Activated naive CD4-positive, alpha-beta T cell treated with anti-CD3 and anti-CD28 coated beads for 36 hours (primary cell): ENCODE measurements at regions of chr1 and their contacts with region 1.

Region 1: DNA sequence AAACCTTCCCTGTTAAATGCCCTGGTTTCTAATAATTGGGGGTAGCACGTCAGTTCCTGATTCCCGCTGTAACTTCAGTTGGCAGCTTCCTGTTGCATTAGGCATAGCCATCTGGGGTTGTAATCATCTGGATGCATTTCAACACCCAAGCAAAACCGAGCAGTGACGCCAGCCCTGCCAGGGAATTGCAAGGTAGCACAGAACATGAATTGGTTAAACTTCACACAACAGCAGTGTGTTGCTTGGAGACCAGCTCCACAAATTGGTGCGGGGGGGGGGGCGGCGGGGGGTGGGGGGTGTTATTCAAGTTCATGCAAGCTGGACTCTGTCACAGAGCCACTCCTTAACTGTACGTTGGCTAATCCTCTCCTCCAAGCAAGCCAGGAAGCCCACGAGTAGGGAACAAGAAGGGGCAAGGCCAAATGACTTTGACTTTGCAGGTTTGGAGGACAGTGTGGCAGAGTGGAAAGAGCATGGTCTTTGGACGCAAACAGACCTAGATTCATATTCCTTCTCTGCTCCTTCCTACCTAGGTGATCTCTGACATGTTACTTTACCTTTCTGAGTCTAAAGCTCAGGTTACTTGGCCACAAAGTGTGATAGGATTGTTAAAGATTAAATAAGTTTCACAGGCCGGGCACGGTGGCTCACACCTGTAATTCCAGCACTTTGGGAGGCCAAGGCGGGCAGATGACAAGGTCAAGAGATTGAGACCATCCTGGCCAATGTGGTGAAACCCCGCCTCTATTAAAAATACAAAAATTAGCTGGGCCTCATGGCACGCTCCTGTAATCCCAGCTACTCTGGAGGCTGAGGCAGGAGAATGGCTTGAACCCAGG is 4.7 kb downstream of the LAX1 start:
- DNase-seq: no peak
- H3K4me3 Mint-ChIP-seq: no peak overlapping the region
- H3K27ac Mint-ChIP-seq: no peak overlapping the region
- H3K4me1 Mint-ChIP-seq: peaks cover 25% of the 10 kb centered on the region
- H3K27me3 Mint-ChIP-seq: no peaks in the 10 kb centered on the region

Region 2: DNA sequence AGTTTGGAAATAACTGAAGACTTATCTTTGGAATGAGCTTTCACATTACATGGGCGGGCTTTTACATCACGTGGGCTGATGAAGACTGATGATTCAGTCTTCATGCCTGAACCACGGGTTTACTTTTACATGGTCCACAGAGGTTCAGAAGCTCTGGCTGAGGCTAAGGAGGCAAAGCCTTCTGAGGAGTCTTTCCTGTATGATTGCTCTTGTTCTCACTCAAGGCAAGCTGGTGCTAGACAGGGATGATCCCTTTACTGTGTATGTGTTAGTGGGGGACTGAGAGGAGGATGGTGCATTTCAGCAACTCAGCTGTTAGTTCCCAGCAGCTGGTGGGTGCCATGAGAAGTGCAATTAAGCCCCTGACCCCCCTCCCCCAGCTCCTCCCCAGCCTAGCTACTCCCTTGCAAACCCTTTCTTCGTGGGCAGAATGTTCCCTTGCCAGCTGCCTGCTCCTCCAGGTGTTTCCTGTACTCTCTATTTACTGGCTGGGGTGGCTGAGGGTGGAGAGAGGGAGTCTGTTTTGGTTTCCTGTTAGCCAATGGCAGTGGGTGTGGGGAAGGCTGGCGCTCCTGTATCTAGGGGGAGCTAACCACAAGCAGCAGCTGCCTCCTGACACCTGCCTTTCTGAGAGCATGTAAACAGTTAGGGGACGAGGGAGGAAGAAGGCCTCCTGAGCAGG is 449.0 kb before region 1 on chr1:
- CTCF ChIA-PET with region 1: no interaction called
- intact Hi-C with region 1: loop called (anchors 5 kb)
- DNase-seq: peak; percentile 84
- H3K4me3 Mint-ChIP-seq: peak overlapping the region; percentile 40
- H3K27ac Mint-ChIP-seq: peak overlapping the region; percentile 88
- H3K4me1 Mint-ChIP-seq: peaks cover 76% of the 10 kb centered on the region
- H3K27me3 Mint-ChIP-seq: no peaks in the 10 kb centered on the region

Region 3: DNA sequence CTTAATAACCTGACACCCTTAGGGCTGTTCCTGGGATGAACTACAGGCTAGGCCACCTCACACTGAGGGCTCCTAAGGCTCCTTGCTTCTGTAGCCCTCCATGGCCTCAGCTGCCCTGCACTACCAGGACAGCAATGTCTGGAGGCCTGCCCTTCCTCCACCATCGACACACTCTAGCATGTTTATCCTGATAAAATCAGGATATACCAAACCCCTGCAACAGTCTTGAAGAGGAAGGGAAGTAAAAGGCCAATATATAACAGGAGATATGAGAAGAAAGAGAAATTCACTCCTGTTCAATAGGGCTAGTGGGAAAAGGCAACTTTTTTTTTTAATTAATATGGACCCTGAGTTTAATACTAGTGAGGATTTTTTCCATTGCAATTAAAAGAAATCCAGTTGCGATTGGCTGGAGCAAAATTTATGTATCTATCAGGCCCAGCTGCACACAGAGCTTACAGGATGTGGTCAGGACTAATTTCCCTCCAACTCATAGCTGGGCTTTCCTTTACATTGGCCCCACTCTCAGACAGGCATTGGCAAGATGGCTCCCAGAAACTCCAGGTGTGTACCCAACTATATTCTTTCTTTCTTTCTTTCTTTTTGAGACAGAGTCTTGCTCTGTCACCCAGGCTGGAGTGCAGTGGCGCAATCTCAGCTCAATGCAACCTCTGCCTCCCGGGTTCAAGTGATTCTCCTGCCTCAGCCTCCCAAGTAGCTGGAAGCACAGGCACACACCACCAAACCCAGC is 156.6 kb before region 1 on chr1:
- CTCF ChIA-PET with region 1: no interaction called
- intact Hi-C with region 1: loop called (anchors 5 kb)
- DNase-seq: peak; percentile 57
- H3K4me3 Mint-ChIP-seq: no peak overlapping the region
- H3K27ac Mint-ChIP-seq: peak overlapping the region; percentile 43
- H3K4me1 Mint-ChIP-seq: peaks cover 26% of the 10 kb centered on the region
- H3K27me3 Mint-ChIP-seq: no peaks in the 10 kb centered on the region

Region 4: GRCh38 chr1:203673550-203674427 is 95.9 kb before region 1 on chr1:
- CTCF ChIA-PET with region 1: no interaction called
- intact Hi-C with region 1: loop called (anchors 1 kb)
- DNase-seq: peak; percentile 84
- H3K4me3 Mint-ChIP-seq: peak overlapping the region; percentile 33
- H3K27ac Mint-ChIP-seq: peak overlapping the region; percentile 77
- H3K4me1 Mint-ChIP-seq: peaks cover 45% of the 10 kb centered on the region
- H3K27me3 Mint-ChIP-seq: no peaks in the 10 kb centered on the region

Region 5: DNA sequence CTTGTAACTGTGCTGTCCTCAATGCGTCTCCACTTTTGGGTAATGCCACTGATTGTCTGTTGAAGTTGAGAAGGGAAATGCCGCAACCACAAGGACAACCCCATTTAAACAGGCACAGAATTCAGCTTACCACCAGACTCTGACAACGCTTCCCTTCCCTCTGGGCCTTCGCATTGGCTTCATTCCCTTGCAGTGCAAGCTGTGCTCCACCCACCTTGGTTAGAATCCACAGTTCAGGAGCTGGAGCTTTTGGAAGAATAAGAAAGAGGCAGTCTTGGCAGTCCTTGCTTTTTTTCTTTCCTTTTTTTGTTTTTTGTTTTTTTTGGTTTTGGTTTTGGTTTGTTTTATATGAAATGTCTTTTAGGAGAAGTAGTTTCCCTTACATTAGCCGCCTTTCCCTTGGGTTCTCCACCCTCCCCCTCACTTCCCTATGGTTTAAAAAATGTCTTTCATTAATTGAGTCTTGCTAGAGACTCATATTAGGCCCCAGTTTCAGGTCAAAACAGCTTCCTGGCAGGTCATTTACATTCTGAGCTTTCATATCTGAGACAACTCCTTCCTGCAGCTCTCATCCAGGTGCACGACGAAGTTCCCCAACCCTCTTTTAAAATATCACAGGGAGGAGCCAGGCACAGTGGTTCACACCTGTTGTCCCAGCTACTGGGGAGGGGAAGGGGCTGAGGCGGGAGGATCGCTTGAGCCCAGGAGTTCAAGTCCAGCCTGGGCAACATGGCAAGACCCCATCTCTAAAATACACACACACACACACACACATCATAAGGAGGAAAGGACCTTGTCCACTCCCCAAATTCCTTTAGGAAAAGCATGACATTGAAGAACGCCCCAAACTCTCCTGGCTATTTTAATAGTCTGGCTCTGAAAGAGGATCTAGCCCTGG is 25.4 kb before region 1 on chr1:
- CTCF ChIA-PET with region 1: no interaction called
- intact Hi-C with region 1: loop called (anchors 1 kb)
- DNase-seq: peak; percentile 60
- H3K4me3 Mint-ChIP-seq: peak overlapping the region; percentile 31
- H3K27ac Mint-ChIP-seq: peak overlapping the region; percentile 77
- H3K4me1 Mint-ChIP-seq: peaks cover 19% of the 10 kb centered on the region
- H3K27me3 Mint-ChIP-seq: no peaks in the 10 kb centered on the region

Region 6: DNA sequence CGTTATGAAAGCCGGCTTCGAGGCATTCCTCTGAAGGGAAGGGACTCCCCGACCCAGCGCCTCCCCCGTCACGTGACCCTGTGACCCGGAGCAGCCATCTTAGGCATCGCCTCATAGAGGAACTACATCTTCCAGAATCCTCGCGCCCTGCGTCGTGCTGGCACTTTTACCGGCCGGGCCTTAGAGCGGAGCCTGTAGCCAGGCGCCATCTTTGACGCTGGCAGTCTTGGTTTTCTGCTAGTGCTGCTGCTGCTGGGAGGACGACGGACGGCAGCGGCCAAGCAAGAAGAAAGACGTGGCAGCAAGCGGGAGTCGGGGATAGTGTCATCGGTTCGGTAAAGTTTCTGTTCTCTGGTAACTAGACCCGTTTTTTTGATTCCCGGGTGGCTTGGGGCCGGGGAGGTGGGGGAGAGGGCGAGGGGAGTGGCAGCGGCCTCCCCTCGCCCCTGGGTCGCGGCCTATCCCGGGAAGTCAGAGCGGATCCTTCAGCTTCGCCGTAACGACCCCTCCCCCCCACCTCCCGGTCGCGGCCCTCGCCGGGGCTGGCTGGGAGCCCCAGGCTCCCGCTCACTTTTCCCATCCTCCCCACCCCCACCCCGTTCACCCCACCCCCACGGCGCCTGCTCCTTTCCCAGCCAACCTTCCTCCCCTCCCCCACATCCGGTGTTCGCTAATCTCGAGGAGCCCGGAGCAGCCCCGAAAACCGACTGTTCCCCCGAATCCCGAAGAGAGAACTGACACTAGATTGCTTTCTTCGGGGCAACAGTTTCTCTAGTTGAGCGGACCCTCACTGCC is 25.9 kb after region 1 on chr1 and contains the starts of genes ZBED6 and ZC3H11A:
- CTCF ChIA-PET with region 1: interaction called, 4 read pairs
- intact Hi-C with region 1: loop called (anchors 1 kb)
- DNase-seq: peak; percentile 100
- H3K4me3 Mint-ChIP-seq: peak within 1 kb of the TSS; percentile 96
- H3K27ac Mint-ChIP-seq: peak within 1 kb of the TSS; percentile 98
- H3K4me1 Mint-ChIP-seq: peaks cover 47% of the 10 kb centered on the region
- H3K27me3 Mint-ChIP-seq: no peaks in the 10 kb centered on the region
- total RNA-seq, gene ZBED6: 23.3 to 23.6 TPM
- total RNA-seq, gene ZC3H11A: 78.4 to 80.9 TPM

Region 7: GRCh38 chr1:204032632-204033235 is 263.0 kb after region 1 on chr1:
- CTCF ChIA-PET with region 1: no interaction called
- intact Hi-C with region 1: no loop called
- DNase-seq: no peak
- H3K4me3 Mint-ChIP-seq: no peak overlapping the region
- H3K27ac Mint-ChIP-seq: no peak overlapping the region
- H3K4me1 Mint-ChIP-seq: no peaks in the 10 kb centered on the region
- H3K27me3 Mint-ChIP-seq: peaks cover 6% of the 10 kb centered on the region